Mammary epithelial cell (primary cell): ENCODE measurements at regions of chr11 and their contacts with region 1.

Region 1: GRCh38 chr11:93887111-93887510 is 36.7 kb upstream of the VSTM5 start:
- DNase-seq: no peak
- H3K4me3 ChIP-seq: no peak overlapping the region
- H3K27ac ChIP-seq: no peak overlapping the region
- H3K4me1 ChIP-seq: no peaks in the 10 kb centered on the region
- H3K27me3 ChIP-seq: peaks cover 7% of the 10 kb centered on the region
- CTCF ChIP-seq: no peak

Region 2: GRCh38 chr11:92931746-92932422 is 955.2 kb before region 1 on chr11:
- CTCF ChIA-PET with region 1: no interaction called
- dilution Hi-C with region 1: no loop called
- in situ Hi-C with region 1: no loop called
- intact Hi-C with region 1: no loop called
- DNase-seq: peak; percentile 5
- H3K4me3 ChIP-seq: no peak overlapping the region
- H3K27ac ChIP-seq: no peak overlapping the region
- H3K4me1 ChIP-seq: no peaks in the 10 kb centered on the region
- H3K27me3 ChIP-seq: no peaks in the 10 kb centered on the region
- CTCF ChIP-seq: no peak

Region 3: DNA sequence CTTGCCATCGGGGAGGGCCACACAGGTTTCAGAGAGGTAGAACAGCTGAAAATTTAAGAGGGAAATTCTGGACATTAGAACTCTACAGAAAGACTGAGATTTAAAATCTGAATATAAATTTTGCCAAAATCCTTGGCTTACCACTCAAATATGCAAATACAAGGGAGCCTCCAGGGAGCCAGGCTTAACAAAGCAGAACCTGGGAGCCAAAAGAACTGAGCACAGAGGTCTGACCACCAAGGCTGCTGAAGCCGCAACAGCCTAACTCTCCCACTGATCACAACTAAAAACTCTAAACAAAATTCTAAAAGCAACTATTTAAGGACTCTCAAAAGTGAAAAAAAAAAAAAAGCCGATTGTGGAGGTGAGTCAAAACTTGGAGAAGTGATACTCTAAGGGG is 451.5 kb after region 1 on chr11:
- CTCF ChIA-PET with region 1: no interaction called
- dilution Hi-C with region 1: loop called (anchors 5 kb)
- in situ Hi-C with region 1: no loop called
- intact Hi-C with region 1: no loop called
- DNase-seq: no peak
- H3K4me3 ChIP-seq: no peak overlapping the region
- H3K27ac ChIP-seq: no peak overlapping the region
- H3K4me1 ChIP-seq: no peaks in the 10 kb centered on the region
- H3K27me3 ChIP-seq: no peaks in the 10 kb centered on the region
- CTCF ChIP-seq: no peak